ENCODE measurements at regions of chr3 and their contacts with region 1.

Region 1: DNA sequence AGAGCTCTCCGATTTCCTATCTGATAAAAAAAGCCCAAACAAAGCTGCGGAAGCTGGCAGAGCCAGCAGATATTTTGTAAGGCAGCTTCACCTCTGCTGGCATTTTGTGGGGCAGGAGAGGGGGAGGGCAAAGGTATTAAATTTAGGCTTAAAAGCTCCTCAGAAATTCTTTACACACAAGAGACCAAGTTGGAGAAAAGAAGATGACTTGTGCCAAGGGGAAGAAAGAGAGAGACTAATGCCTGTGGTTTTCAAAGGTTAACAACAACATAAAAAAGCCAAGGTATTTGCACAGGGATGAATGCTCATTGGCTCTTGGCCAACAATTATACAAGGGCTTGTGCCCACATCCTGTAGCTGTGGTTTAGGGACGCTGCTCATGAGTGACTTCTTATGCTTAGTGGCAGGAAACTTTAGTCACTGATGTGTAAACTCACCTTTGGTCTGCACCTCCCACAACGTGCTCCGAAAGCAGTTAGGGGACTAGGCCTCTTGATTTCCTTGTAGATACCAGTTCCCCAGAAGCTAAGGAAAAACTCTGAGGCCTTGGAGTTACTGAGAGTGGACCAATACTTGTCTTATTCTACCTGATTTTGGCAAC is 152.9 kb downstream of the TPRG1 start:
- DNase-seq: peak; percentile 43 to 96 (median 79)
- ATAC-seq: peak; percentile 98 to 99 (median 98)
- H3K4me3 ChIP-seq: no peak overlapping the region
- H3K4me3 Mint-ChIP-seq: peak overlapping the region; percentile 55 to 73 (median 71)
- H3K27ac ChIP-seq: peak overlapping the region; percentile 84
- H3K27ac Mint-ChIP-seq: peak overlapping the region; percentile 92 to 97
- H3K4me1 ChIP-seq: peaks cover 28 to 46% of the 10 kb centered on the region in 2 experiments
- H3K4me1 Mint-ChIP-seq: peaks cover 60 to 74% (median 64%) of the 10 kb centered on the region in 3 donors
- H3K27me3 ChIP-seq: no peaks in the 10 kb centered on the region
- H3K27me3 Mint-ChIP-seq: no peaks in the 10 kb centered on the region

Region 2: GRCh38 chr3:189355481-189356201 is 31.0 kb after region 1 on chr3:
- CTCF ChIA-PET with region 1: interaction called in 1 of 2 experiments, 10 read pairs
- POLR2A ChIA-PET with region 1: interaction called in 1 of 2 experiments, 3 read pairs
- DNase-seq: peak in 33 of 35 experiments; percentile 1 to 70 (median 18)
- ATAC-seq: peak; percentile 87 to 98 (median 96)
- H3K4me3 ChIP-seq: peak overlapping the region in 1 of 2 donors; percentile 3
- H3K4me3 Mint-ChIP-seq: peak overlapping the region; percentile 43 to 64 (median 49)
- H3K27ac ChIP-seq: peak overlapping the region; percentile 61
- H3K27ac Mint-ChIP-seq: peak overlapping the region; percentile 91 to 92
- H3K4me1 ChIP-seq: peaks cover 17 to 20% of the 10 kb centered on the region in 2 experiments
- H3K4me1 Mint-ChIP-seq: peaks cover 30 to 41% (median 36%) of the 10 kb centered on the region in 3 donors
- H3K27me3 ChIP-seq: no peaks in the 10 kb centered on the region
- H3K27me3 Mint-ChIP-seq: no peaks in the 10 kb centered on the region

Region 3: GRCh38 chr3:189530822-189531221 is 206.2 kb after region 1 on chr3:
- CTCF ChIA-PET with region 1: interaction called in 1 of 2 experiments, 10 read pairs
- POLR2A ChIA-PET with region 1: no interaction called
- DNase-seq: no peak
- ATAC-seq: no peak
- H3K4me3 ChIP-seq: no peak overlapping the region
- H3K4me3 Mint-ChIP-seq: no peak overlapping the region
- H3K27ac ChIP-seq: no peak overlapping the region
- H3K27ac Mint-ChIP-seq: no peak overlapping the region
- H3K4me1 ChIP-seq: peaks cover 0 to 6% of the 10 kb centered on the region in 2 experiments
- H3K4me1 Mint-ChIP-seq: peaks cover 4 to 8% (median 7%) of the 10 kb centered on the region in 3 donors
- H3K27me3 ChIP-seq: no peaks in the 10 kb centered on the region
- H3K27me3 Mint-ChIP-seq: no peaks in the 10 kb centered on the region

Measured in T-cell (primary cell).